Caco-2 (cell line): ENCODE measurements at regions of chr11 and their contacts with region 1.

Region 1: DNA sequence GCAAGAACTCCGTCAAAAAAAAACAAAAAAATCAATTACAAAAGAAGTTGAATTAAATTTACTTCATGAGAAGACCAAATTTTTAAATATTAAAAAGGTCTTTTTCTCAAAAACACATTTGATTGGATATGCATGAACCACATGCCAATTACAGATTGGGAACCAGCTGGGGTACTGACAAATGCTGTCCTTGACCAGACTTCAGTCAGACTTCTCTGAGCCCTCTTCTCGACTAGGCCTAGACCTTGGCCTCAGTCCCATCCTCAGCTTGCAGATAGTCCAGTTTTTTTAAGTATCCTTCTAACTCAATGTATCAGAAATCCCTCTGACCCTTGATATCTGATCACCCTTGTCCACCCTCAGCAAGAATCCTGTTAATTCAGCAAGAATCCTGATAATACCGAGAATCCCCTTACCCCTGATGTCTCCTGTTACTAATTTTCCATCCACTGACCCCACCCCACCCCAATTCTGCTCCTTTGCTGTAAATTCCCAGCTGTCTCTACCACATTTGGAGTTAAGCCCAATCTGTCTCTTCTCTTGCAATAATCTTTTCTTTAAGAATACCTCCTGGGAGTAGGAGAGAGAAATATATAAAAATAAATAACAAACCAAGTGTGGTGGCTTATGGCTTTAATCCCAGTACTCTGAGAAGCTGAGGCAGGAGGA is 30.9 kb downstream of the OR4D9 start:
- DNase-seq: no peak
- H3K4me3 ChIP-seq: no peak overlapping the region
- H3K4me3 Mint-ChIP-seq: no peak overlapping the region
- H3K27ac Mint-ChIP-seq: no peak overlapping the region
- H3K4me1 ChIP-seq: peaks cover 9% of the 10 kb centered on the region
- H3K4me1 Mint-ChIP-seq: peaks cover 6% of the 10 kb centered on the region
- H3K27me3 ChIP-seq: no peaks in the 10 kb centered on the region
- H3K27me3 Mint-ChIP-seq: no peaks in the 10 kb centered on the region
- CTCF ChIP-seq: no peak

Region 2: GRCh38 chr11:59802639-59803176 is 260.4 kb after region 1 on chr11:
- CTCF ChIA-PET with region 1: no interaction called
- POLR2A ChIA-PET with region 1: no interaction called
- intact Hi-C with region 1: loop called (anchors 2 kb)
- DNase-seq: peak in 1 of 2 experiments; percentile 68
- H3K4me3 ChIP-seq: no peak overlapping the region
- H3K4me3 Mint-ChIP-seq: no peak overlapping the region
- H3K27ac Mint-ChIP-seq: no peak overlapping the region
- H3K4me1 ChIP-seq: 0 out of 2 replicates have a peak, but pooled peaks cover 9% of the 10 kb centered on the region
- H3K4me1 Mint-ChIP-seq: peaks cover 19% of the 10 kb centered on the region
- H3K27me3 ChIP-seq: no peaks in the 10 kb centered on the region
- H3K27me3 Mint-ChIP-seq: no peaks in the 10 kb centered on the region
- CTCF ChIP-seq: peak; percentile 60 to 68